ENCODE measurements at regions of chr14 and their contacts with region 1.

Region 1: DNA sequence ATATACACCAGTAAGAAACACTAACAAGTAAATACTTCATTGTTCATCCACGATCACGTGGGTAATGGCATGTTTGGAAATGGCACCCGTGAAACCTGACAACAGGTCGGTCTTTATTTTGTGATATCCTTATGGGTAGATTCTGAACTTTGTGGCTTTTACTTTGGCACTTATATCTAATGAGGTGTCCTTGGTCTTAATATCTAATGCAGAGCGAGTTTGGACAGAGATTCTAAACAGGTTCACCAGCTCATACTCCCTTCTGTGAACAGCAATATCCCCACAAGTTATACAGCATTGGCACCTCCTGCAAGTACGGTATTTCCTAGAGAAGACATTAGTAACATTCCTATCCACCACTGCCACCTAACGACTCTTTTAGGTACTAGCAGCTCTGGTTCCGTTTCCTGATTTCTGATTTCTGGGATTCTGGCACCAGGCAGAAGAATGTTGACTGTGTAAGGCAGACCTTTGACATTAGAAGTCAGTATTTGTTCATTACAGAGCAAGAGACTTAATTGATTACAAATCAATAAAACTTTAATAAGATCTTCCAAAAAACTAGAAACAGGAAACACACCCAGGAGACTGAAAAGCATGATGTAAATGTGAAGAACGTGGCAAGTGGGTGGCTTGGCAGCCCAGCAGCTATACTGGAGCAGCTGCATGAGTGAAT is 2.4 kb downstream of the ANG start:
- DNase-seq: peak; percentile 83
- ATAC-seq: peak; percentile 97
- H3K4me3 ChIP-seq: no peak overlapping the region
- H3K4me3 Mint-ChIP-seq: no peak overlapping the region
- H3K27ac ChIP-seq: no peak overlapping the region
- H3K27ac Mint-ChIP-seq: no peak overlapping the region
- H3K4me1 ChIP-seq: peaks cover 0 to 3% of the 10 kb centered on the region in 2 donors
- H3K4me1 Mint-ChIP-seq: peaks cover 5% of the 10 kb centered on the region
- H3K27me3 ChIP-seq: no peaks in the 10 kb centered on the region
- H3K27me3 Mint-ChIP-seq: no peaks in the 10 kb centered on the region
- CTCF ChIP-seq: peak; percentile 99

Region 2: GRCh38 chr14:20327005-20327869 is 363.7 kb before region 1 on chr14:
- CTCF ChIA-PET with region 1: interaction called, 39 read pairs
- POLR2A ChIA-PET with region 1: no interaction called
- intact Hi-C with region 1: loop called (anchors 1 kb)
- DNase-seq: peak; percentile 81
- ATAC-seq: peak; percentile 67
- H3K4me3 ChIP-seq: no peak overlapping the region
- H3K4me3 Mint-ChIP-seq: peak overlapping the region; percentile 1
- H3K27ac ChIP-seq: no peak overlapping the region
- H3K27ac Mint-ChIP-seq: peak overlapping the region; percentile 33
- H3K4me1 ChIP-seq: peaks cover under 1 to 6% of the 10 kb centered on the region in 2 donors
- H3K4me1 Mint-ChIP-seq: peaks cover 30% of the 10 kb centered on the region
- H3K27me3 ChIP-seq: no peaks in the 10 kb centered on the region
- H3K27me3 Mint-ChIP-seq: no peaks in the 10 kb centered on the region
- CTCF ChIP-seq: peak; percentile 91

Region 3: GRCh38 chr14:20530771-20531571 is 160.0 kb before region 1 on chr14:
- CTCF ChIA-PET with region 1: interaction called, 10 read pairs
- POLR2A ChIA-PET with region 1: no interaction called
- intact Hi-C with region 1: loop called (anchors 1 kb)
- DNase-seq: peak; percentile 78
- ATAC-seq: peak; percentile 65
- H3K4me3 ChIP-seq: no peak overlapping the region
- H3K4me3 Mint-ChIP-seq: no peak overlapping the region
- H3K27ac ChIP-seq: no peak overlapping the region
- H3K27ac Mint-ChIP-seq: peak overlapping the region; percentile 42
- H3K4me1 ChIP-seq: peaks cover 0 to 4% of the 10 kb centered on the region in 2 donors
- H3K4me1 Mint-ChIP-seq: peaks cover 9% of the 10 kb centered on the region
- H3K27me3 ChIP-seq: no peaks in the 10 kb centered on the region
- H3K27me3 Mint-ChIP-seq: peaks cover 9% of the 10 kb centered on the region
- CTCF ChIP-seq: peak; percentile 83

Region 4: GRCh38 chr14:20632682-20633428 is 58.1 kb before region 1 on chr14:
- CTCF ChIA-PET with region 1: interaction called, 13 read pairs
- POLR2A ChIA-PET with region 1: no interaction called
- intact Hi-C with region 1: no loop called
- DNase-seq: peak; percentile 81
- ATAC-seq: peak; percentile 49
- H3K4me3 ChIP-seq: peak overlapping the region in 4 of 5 experiments; percentile 33 to 65 (median 50)
- H3K4me3 Mint-ChIP-seq: peak overlapping the region; percentile 86
- H3K27ac ChIP-seq: no peak overlapping the region
- H3K27ac Mint-ChIP-seq: peak overlapping the region; percentile 91
- H3K4me1 ChIP-seq: peaks cover 35 to 38% of the 10 kb centered on the region in 2 donors
- H3K4me1 Mint-ChIP-seq: peaks cover 44% of the 10 kb centered on the region
- H3K27me3 ChIP-seq: peaks cover 0 to 38% (median 14%) of the 10 kb centered on the region in 4 experiments
- H3K27me3 Mint-ChIP-seq: peaks cover 35% of the 10 kb centered on the region
- CTCF ChIP-seq: no peak

Region 5: GRCh38 chr14:20662968-20663732 is 27.8 kb before region 1 on chr14:
- CTCF ChIA-PET with region 1: interaction called, 445 read pairs
- POLR2A ChIA-PET with region 1: interaction called, 5 read pairs
- intact Hi-C with region 1: loop called (anchors 1 kb)
- DNase-seq: peak; percentile 90
- ATAC-seq: peak; percentile 85
- H3K4me3 ChIP-seq: peak overlapping the region; percentile 30 to 93 (median 64)
- H3K4me3 Mint-ChIP-seq: peak overlapping the region; percentile 93
- H3K27ac ChIP-seq: peak overlapping the region in 1 of 2 donors; percentile 34
- H3K27ac Mint-ChIP-seq: peak overlapping the region; percentile 62
- H3K4me1 ChIP-seq: peaks cover 39 to 55% of the 10 kb centered on the region in 2 donors
- H3K4me1 Mint-ChIP-seq: peaks cover 53% of the 10 kb centered on the region
- H3K27me3 ChIP-seq: peaks cover 0 to 7% (median 0%) of the 10 kb centered on the region in 4 experiments
- H3K27me3 Mint-ChIP-seq: no peaks in the 10 kb centered on the region
- CTCF ChIP-seq: peak; percentile 71

Region 6: DNA sequence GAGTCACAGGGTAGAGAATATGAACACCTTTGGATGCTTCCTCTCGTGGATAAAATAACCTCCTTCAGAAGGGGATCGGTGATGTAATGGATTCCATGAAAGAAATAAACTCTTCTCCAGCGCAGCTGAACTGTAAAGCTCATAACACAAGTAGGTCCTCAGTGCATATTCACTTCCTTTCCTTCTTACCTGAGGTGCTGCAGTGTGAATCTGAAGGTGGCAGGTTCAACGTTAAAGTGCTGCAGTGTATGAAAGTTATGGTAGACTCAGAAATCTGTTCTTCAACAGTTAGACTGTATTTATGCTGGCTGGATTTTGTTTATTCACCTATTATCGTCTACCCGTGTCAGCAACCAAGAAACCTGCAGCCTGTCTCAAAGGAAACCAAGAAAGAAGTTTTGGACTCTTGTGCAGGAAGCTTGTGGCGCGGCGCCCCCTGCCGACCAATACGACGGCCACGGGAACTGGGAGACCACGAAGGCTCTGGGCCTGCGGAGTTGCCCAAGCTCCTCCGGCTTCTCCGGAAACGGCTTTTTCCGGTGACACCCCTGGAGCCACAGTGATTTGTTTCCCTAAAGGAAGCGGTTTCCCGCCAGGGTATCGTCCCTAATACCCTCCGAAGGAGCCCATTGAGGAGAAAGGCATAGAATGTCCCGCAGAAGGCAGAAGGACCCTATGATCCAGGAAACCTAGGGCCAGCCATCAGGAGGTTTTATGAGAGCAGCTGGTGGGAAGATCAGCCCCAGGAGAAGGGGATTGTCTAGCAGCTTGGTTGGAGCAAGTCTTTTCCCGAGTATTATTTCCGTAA is 182.6 kb after region 1 on chr14:
- CTCF ChIA-PET with region 1: interaction called, 90 read pairs
- POLR2A ChIA-PET with region 1: no interaction called
- intact Hi-C with region 1: no loop called
- DNase-seq: peak; percentile 77
- ATAC-seq: peak; percentile 56
- H3K4me3 ChIP-seq: peak overlapping the region in 1 of 5 experiments; percentile 26
- H3K4me3 Mint-ChIP-seq: peak overlapping the region; percentile 54
- H3K27ac ChIP-seq: no peak overlapping the region
- H3K27ac Mint-ChIP-seq: no peak overlapping the region
- H3K4me1 ChIP-seq: peaks cover 6 to 9% of the 10 kb centered on the region in 2 donors
- H3K4me1 Mint-ChIP-seq: peaks cover 13% of the 10 kb centered on the region
- H3K27me3 ChIP-seq: peaks cover 0 to 17% (median 2%) of the 10 kb centered on the region in 4 experiments
- H3K27me3 Mint-ChIP-seq: peaks cover 37% of the 10 kb centered on the region
- CTCF ChIP-seq: peak; percentile 82

Measured in B cell (primary cell).